Activated CD4-positive, alpha-beta T cell treated with anti-CD3 and anti-CD28 coated beads for 36 hours (primary cell): ENCODE measurements at regions of chr2 and their contacts with region 1.

Region 1: GRCh38 chr2:182077451-182078142 is 91.9 kb downstream of the PPP1R1C start:
- DNase-seq: peak; percentile 23
- ATAC-seq: peak; percentile 53
- H3K4me3 Mint-ChIP-seq: no peak overlapping the region
- H3K27ac Mint-ChIP-seq: no peak overlapping the region
- H3K4me1 Mint-ChIP-seq: no peaks in the 10 kb centered on the region
- H3K27me3 Mint-ChIP-seq: peaks cover 2% of the 10 kb centered on the region

Region 2: GRCh38 chr2:181077128-181077709 is 1000.4 kb before region 1 on chr2:
- CTCF ChIA-PET with region 1: no interaction called
- POLR2A ChIA-PET with region 1: no interaction called
- intact Hi-C with region 1: loop called in 1 of 2 experiments (anchors 1 kb)
- DNase-seq: no peak
- ATAC-seq: peak; percentile 90
- H3K4me3 Mint-ChIP-seq: no peak overlapping the region
- H3K27ac Mint-ChIP-seq: no peak overlapping the region
- H3K4me1 Mint-ChIP-seq: peaks cover 5% of the 10 kb centered on the region
- H3K27me3 Mint-ChIP-seq: no peaks in the 10 kb centered on the region

Region 3: DNA sequence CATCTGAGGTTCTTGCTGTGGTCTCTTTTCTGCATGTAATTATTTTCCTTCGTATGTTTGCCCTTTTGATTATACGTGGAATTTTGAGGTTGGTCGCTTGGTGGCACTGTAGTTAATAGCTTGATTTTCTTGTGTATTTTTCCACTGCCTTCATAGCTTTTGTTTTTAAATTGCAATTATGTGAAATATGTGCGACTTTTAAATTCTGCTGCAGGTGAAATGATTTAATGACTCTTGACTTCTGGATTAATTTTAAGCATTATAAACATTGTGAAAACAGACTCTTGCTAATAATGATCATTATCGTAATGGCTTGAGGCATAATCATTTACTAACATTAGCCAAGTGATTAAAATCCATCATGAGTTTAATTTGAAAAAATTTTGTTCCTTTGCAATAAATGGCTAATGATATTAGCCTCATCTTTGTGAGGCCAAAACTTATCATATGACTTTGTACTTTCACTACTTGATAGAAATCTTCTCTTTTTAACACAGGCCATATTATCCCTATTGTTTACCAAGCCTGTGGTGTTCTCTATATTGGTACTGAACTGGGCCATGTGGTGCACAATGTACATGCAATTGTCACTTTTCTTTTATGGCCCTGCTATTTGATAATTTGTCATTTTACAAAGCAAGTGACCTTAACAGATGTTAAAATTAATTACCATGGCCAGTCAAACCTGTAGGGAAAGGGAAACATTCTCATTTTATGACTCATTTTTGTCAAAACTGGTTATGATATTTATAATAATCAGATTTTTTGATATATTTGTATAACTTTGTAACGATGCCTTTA is 334.5 kb before region 1 on chr2:
- CTCF ChIA-PET with region 1: interaction called, 29 read pairs
- POLR2A ChIA-PET with region 1: no interaction called
- intact Hi-C with region 1: loop called (anchors 1 to 2 kb)
- DNase-seq: peak; percentile 56
- ATAC-seq: no peak
- H3K4me3 Mint-ChIP-seq: no peak overlapping the region
- H3K27ac Mint-ChIP-seq: no peak overlapping the region
- H3K4me1 Mint-ChIP-seq: peaks cover 4% of the 10 kb centered on the region
- H3K27me3 Mint-ChIP-seq: peaks cover under 1% of the 10 kb centered on the region